Ovary (tissue), 10 donors: ENCODE measurements at regions of chr17 and their contacts with region 1.

Region 1: DNA sequence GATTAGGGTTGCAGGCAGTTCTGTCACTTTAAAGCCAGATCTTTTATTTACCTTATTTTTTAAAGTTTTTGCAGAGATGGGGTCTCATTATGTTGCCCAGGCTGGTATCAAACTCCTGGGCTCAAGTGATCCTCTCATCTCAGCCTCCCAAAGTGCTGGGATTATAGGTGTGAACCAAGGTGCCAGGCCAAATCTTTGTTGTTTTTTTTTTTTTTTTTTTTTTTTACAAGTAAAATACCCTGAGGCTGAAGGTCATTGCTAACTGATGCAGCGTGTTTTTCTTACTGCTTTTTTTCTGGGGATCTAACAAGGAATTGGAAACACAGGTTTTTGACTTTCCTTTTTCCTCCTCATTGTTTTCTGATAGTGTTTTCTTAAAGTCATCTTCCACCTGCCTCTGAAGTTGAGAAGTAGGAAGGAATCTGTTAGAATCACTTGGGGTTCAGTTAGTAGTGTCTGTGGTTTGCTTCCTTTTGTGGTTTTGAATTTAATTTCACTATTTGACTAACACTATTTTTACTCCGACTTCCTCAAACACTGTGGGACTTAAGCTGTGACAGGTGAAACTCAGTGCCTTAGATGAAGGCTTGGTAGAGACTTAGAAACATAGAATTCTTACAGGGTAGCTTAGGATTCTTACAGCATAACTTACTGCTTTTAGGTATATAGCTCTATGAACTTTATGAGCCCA is 22.2 kb downstream of the CLTC start:
- DNase-seq: no peak
- H3K4me3 ChIP-seq: no peak overlapping the region
- H3K27ac ChIP-seq: no peak overlapping the region
- H3K4me1 ChIP-seq: peaks cover 3% of the 10 kb centered on the region
- H3K27me3 ChIP-seq: no peaks in the 10 kb centered on the region
- CTCF ChIP-seq: no peak
- EP300 ChIP-seq: no peak
- POLR2A ChIP-seq: no peak

Region 2: DNA sequence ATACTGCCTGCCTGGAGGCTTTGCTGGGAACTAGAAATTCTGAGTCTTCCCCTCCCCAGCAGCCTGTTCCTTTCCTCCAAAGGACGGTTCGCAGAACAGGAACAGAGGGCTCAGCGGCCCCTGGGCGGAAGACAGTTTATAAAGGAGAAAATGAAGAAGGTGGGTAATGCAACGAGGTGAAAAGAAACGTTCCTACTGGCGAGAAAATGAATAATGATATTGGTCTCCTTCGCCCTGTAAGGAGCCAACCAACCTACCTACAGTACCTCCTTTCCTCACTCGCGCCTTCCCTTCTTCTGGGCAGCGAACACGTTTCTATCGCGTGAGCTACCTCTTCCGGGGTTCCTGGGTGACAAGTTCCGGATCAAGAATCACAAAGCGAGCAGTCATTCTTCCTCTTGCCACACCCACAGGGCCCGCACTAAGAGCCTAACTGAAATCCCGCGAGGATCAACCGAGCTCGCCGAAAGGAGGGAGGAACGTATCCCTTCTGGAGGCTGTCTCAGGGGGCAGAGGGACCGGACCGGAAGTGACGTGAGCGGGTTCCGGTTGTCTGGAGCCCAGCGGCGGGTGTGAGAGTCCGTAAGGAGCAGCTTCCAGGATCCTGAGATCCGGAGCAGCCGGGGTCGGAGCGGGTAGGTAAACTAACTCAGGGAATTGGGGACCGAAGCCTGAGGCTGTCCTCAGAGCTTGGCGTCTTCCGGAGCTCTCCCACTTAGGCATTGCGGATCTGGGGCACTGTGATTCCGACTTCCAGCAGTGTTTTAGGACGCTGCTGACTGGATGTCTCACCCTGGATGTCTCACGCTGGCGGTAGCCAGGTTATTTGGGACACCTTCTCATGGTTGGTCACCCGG is 65.4 kb after region 1 on chr17 and contains the starts of genes PTRH2 and VMP1:
- intact Hi-C with region 1: loop called in 1 of 4 experiments (anchors 10 kb)
- DNase-seq: peak; percentile 96 to 98 (median 97)
- H3K4me3 ChIP-seq: peak within 1 kb of the TSS; percentile 88
- H3K27ac ChIP-seq: peak within 1 kb of the TSS; percentile 60 to 81
- H3K4me1 ChIP-seq: peaks cover 8% of the 10 kb centered on the region
- H3K27me3 ChIP-seq: no peaks in the 10 kb centered on the region
- CTCF ChIP-seq: no peak
- EP300 ChIP-seq: no peak
- POLR2A ChIP-seq: peak; percentile 76
- total RNA-seq, gene PTRH2: 11.9 to 28.2 (median 20.0) TPM
- total RNA-seq, gene VMP1: 101 to 667 (median 162) TPM

Region 3: GRCh38 chr17:59786536-59787319 is 144.8 kb after region 1 on chr17:
- intact Hi-C with region 1: no loop called
- DNase-seq: peak in 1 of 5 donors; percentile 59
- H3K4me3 ChIP-seq: peak overlapping the region; percentile 2
- H3K27ac ChIP-seq: peak overlapping the region; percentile 6 to 76
- H3K4me1 ChIP-seq: peaks cover 12% of the 10 kb centered on the region
- H3K27me3 ChIP-seq: no peaks in the 10 kb centered on the region
- CTCF ChIP-seq: no peak
- EP300 ChIP-seq: peak; percentile 97
- POLR2A ChIP-seq: no peak